ENCODE measurements at regions of chr4 and their contacts with region 1.

Region 1: DNA sequence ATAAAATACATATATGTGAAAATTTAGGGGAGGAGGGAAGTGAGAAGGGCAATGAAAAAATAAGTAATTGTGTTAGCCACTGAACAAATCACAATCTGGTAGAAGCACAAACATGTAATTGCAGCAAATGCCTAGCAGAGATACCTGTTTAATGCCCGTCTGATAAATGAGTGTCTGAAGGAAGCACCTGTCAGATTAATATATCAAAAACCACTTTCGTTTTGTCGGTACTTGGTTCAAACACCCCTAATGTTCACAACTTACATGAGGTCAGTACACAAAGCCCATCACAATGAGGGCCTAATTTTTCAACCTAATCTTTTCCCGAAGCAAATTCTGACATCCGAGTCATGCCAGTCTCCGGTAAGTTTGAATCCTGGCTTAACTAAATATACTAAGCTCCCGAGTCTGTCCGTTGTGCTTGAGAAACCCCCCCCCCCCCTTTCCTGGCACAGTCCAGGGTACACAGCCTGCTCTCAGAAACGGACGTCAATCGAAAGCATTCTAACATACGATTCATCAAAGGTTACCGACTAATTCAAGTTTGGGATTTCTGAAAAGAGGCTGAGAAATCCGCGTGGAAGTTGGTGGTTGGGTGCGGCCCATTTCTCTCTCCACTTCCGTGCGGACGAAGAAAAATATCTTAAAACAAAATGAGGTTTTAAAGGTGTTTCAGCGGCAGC is 758 bp downstream of the SDAD1 start:
- DNase-seq: no peak
- ATAC-seq: no peak
- H3K4me3 ChIP-seq: peak overlapping the region; percentile 84 to 91
- H3K27ac ChIP-seq: peak overlapping the region; percentile 25
- H3K4me1 ChIP-seq: peaks cover 7 to 17% of the 10 kb centered on the region in 2 experiments; a peak in 3 of 4 replicates
- H3K27me3 ChIP-seq: no peaks in the 10 kb centered on the region
- CTCF ChIP-seq: no peak
- POLR2A ChIP-seq: no peak
- RAD21 ChIP-seq: no peak

Region 2: GRCh38 chr4:75940692-75941253 is 49.2 kb before region 1 on chr4 and contains the start of gene NAAA:
- CTCF ChIA-PET with region 1: no interaction called
- POLR2A ChIA-PET with region 1: no interaction called
- RAD21 ChIA-PET with region 1: interaction called in 1 of 2 experiments, 3 read pairs
- intact Hi-C with region 1: loop called (anchors 2 kb)
- DNase-seq: peak; percentile 51
- ATAC-seq: peak; percentile 90
- H3K4me3 ChIP-seq: peak within 1 kb of the TSS; percentile 74 to 91
- H3K27ac ChIP-seq: peak within 1 kb of the TSS; percentile 84
- H3K4me1 ChIP-seq: peaks cover 6 to 19% of the 10 kb centered on the region in 2 experiments
- H3K27me3 ChIP-seq: no peaks in the 10 kb centered on the region
- CTCF ChIP-seq: peak in 2 of 3 experiments; percentile 28 to 45; a peak in 2 of 6 replicates
- POLR2A ChIP-seq: no peak
- RAD21 ChIP-seq: no peak
- total RNA-seq, gene NAAA: 17.0 TPM

Region 3: DNA sequence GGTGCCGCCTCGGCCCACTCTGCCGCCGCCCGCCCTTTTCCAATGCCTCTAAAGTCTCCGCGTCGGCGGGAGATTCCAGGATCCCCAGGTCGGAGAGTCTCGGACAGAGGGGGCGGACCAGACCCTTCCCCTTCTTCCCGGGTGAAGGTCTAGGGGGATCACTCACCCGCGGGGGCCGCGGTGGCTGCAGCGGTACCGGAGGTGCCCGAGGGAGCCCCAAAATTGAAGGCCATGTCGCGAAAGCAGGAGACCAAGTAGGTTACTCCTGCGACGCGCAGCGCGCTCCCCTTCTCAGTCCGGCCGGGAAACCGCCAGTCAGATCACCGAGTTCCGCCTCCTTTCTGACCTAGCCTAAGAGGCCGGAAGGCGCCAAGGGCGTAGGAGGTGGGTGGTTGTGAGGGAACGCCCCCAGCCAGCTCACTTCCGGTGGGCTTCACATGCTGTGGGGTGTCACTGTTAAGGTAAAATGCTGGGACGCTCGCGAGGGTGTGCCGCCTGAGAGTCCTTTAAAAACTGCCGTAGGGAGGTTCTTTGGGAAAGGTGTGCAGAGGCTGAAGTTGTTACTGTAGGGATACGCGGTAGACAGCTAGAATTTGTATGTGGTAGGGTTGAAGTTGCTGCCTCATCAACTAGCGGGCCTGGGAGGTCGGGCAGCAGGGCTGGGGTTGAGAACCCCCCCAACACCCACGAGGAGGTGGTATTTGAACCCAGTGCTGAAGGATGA is 158.3 kb after region 1 on chr4 and contains the start of gene NUP54:
- CTCF ChIA-PET with region 1: no interaction called
- POLR2A ChIA-PET with region 1: no interaction called
- RAD21 ChIA-PET with region 1: no interaction called
- intact Hi-C with region 1: loop called (anchors 5 kb)
- DNase-seq: peak; percentile 94
- ATAC-seq: peak; percentile 91
- H3K4me3 ChIP-seq: peak within 1 kb of the TSS; percentile 84 to 89
- H3K27ac ChIP-seq: peak within 1 kb of the TSS; percentile 75
- H3K4me1 ChIP-seq: peaks cover 8 to 19% of the 10 kb centered on the region in 2 experiments; a peak in 3 of 4 replicates
- H3K27me3 ChIP-seq: no peaks in the 10 kb centered on the region
- CTCF ChIP-seq: no peak
- POLR2A ChIP-seq: peak; percentile 78
- RAD21 ChIP-seq: no peak
- total RNA-seq, gene NUP54: 53.9 TPM

Measured in HCT116 (cell line).